AG04449 (cell line): ENCODE measurements at regions of chr7 and their contacts with region 1.

Region 1: DNA sequence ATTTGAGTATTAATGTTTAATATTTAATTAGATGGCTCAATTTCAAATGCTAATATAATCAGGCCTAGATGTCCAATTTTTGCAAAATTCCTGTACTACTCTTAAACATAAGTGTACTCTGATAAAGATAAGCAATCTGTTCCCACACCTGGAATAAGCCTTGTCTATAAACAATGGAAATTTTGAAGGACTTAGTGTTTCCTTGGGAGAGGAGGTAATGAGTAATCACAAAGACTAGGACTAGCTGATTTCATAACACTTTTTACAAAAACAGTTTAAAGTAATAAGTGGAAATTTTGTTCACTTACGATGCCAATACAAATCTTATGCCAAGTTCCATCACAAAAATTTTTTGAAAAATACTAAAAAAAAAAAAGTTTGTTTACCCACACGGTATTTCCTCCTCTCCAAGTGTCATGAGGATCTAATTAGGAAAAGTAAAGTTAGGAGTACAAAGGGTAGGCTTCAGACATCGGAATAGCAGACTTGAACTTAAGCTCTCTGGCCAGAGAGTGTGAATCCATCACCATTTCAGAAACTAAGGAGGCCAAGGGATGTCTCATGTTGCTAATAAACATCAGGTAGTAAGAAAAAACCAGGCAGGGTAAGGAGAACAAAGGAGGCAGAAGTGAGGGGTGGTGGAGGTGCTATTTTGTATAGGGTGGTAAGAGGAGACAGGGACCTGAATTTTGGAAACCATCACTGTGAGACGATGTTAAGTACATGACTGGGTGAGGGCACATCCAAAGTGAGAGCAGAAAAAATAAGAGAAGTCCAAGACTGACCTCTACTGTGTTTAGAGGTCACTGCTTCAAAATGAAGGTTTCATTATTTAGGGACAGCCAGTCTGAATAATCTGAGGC is 61.3 kb downstream of the RAPGEF5 start:
- DNase-seq: no peak
- H3K4me3 ChIP-seq: no peak overlapping the region
- CTCF ChIP-seq: no peak

Region 2: GRCh38 chr7:22202141-22202540 is 93.5 kb before region 1 on chr7:
- CTCF ChIA-PET with region 1: no interaction called
- POLR2A ChIA-PET with region 1: no interaction called
- DNase-seq: no peak
- H3K4me3 ChIP-seq: no peak overlapping the region
- CTCF ChIP-seq: no peak

Region 3: GRCh38 chr7:22488643-22489462 is 193.2 kb after region 1 on chr7:
- CTCF ChIA-PET with region 1: interaction called, 21 read pairs
- POLR2A ChIA-PET with region 1: no interaction called
- DNase-seq: peak; percentile 26
- H3K4me3 ChIP-seq: no peak overlapping the region
- CTCF ChIP-seq: peak; percentile 65